GM10248 (cell line): ENCODE measurements at regions of chr2 and their contacts with region 1.

Region 1: GRCh38 chr2:3651691-3652648 is 6.0 kb upstream of the ALLC start:
- DNase-seq: peak; percentile 88
- CTCF ChIP-seq: no peak

Region 2: DNA sequence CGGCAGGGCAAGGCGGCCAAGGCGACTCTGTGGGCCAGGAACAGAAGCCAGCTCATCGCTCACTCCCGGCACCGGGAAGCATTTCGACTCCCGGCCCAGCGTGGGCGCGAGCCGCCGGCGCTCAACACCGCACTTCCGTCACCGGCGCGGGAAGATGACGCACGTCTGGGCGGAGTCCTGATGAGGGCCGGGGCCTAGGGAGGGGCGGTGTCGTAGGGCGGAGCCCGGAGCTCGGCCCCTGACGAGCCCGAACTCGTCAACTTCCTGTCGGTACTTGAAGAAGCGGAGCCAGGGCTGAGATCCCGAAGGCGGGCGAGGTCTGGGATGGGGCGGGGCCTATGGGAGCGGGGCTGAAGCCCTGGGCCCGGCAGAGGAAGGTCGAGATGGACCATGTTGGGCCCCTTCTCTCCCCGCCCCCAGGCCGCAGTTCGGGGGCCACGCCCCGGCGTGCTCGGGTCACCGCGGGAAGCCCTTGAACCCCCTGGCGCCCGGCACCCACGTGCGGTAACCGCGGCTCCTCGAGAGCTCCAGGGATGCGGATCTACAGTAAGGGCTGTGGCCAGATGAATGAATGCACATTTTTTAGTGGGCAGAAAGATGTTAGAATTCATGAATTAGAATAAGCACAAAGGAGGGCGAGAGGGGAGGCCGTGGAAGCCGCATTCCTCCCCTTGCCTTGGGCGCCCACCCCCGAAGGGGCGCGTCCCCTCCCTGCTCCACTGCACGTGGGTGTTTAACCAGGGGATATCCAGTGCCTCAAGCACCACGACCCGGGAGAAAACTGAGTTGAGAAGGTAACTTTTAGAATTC is 93.6 kb before region 1 on chr2 and contains the start of gene RNASEH1:
- CTCF ChIA-PET with region 1: interaction called, 13 read pairs
- POLR2A ChIA-PET with region 1: no interaction called
- DNase-seq: peak; percentile 100
- CTCF ChIP-seq: peak; percentile 3

Region 3: GRCh38 chr2:3624059-3624794 is 27.7 kb before region 1 on chr2:
- CTCF ChIA-PET with region 1: interaction called, 15 read pairs
- POLR2A ChIA-PET with region 1: no interaction called
- DNase-seq: no peak
- CTCF ChIP-seq: no peak

Region 4: GRCh38 chr2:3641841-3642421 is 10.0 kb before region 1 on chr2:
- CTCF ChIA-PET with region 1: interaction called, 13 read pairs
- POLR2A ChIA-PET with region 1: no interaction called
- DNase-seq: no peak
- CTCF ChIP-seq: no peak

Region 5: DNA sequence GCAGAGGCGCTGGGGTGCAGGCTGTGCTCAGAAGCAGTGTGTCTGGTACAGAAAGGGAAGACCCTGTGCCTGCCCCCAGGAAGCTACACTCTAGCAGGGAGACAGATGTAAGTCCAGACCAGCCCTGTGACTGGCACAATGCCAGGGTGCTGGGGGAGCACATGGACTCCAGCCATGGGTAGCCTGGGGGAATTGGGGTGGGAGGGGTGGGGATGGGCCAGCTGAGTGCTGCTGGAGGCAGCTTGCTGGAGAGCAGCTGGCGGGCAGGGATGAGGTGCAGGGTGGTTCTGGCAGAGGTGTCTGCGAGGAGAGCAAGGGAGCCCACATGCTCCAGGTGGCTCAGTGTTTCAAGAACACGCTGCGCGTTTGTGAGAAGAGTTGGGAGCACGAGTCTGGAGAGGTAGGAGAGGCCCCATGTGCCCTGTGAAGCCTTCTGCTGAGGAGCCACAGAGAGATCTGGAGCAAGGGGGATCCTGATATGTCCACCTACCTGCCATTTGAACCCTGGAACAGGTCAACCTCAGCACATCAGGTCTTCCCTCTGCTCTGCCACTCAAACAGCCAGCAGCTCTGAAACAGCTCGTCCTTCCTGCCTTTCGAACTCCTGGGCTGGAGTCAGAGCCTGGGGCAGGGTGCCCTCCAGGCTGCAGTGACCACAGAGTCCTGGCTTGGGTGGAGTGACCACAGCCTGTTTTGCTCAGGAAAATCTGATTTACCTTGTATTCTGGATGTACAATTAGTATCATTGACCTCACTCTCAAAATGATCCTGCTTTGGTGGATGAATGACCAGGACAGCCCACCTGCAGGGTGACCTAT is 21.1 kb after region 1 on chr2:
- CTCF ChIA-PET with region 1: no interaction called
- POLR2A ChIA-PET with region 1: no interaction called
- DNase-seq: no peak
- CTCF ChIP-seq: no peak